ENCODE measurements at regions of chr12 and their contacts with region 1.

Region 1: DNA sequence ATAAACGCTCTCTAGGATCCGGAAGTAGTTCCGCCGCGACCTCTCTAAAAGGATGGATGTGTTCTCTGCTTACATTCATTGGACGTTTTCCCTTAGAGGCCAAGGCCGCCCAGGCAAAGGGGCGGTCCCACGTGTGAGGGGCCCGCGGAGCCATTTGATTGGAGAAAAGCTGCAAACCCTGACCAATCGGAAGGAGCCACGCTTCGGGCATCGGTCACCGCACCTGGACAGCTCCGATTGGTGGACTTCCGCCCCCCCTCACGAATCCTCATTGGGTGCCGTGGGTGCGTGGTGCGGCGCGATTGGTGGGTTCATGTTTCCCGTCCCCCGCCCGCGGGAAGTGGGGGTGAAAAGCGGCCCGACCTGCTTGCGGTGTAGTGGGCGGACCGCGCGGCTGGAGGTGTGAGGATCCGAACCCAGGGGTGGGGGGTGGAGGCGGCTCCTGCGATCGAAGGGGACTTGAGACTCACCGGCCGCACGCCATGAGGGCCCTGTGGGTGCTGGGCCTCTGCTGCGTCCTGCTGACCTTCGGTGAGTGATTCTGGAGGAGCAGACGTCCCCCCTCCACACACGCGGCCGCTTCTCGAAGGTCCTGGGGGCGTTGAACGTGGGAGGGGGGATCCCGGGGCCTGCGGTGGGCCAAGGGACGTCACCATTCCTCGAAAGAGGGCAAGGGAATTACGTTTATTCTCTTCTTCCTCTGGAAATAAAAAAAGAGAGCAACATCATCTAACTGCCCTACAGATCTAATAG is at the start of gene HSP90B1:
- DNase-seq: peak; percentile 100
- H3K4me3 Mint-ChIP-seq: peak within 1 kb of the TSS; percentile 91
- H3K27ac Mint-ChIP-seq: peak within 1 kb of the TSS; percentile 99
- H3K4me1 Mint-ChIP-seq: peaks cover 73% of the 10 kb centered on the region
- H3K27me3 Mint-ChIP-seq: peaks cover 6% of the 10 kb centered on the region
- total RNA-seq, gene HSP90B1: 427 and 446 TPM in 2 replicates

Region 2: GRCh38 chr12:103877934-103878510 is 52.2 kb before region 1 on chr12:
- intact Hi-C with region 1: loop called (anchors 1 kb)
- DNase-seq: peak; percentile 53
- H3K4me3 Mint-ChIP-seq: no peak overlapping the region
- H3K27ac Mint-ChIP-seq: no peak overlapping the region
- H3K4me1 Mint-ChIP-seq: peaks cover 36% of the 10 kb centered on the region
- H3K27me3 Mint-ChIP-seq: peaks cover 10% of the 10 kb centered on the region

Region 3: DNA sequence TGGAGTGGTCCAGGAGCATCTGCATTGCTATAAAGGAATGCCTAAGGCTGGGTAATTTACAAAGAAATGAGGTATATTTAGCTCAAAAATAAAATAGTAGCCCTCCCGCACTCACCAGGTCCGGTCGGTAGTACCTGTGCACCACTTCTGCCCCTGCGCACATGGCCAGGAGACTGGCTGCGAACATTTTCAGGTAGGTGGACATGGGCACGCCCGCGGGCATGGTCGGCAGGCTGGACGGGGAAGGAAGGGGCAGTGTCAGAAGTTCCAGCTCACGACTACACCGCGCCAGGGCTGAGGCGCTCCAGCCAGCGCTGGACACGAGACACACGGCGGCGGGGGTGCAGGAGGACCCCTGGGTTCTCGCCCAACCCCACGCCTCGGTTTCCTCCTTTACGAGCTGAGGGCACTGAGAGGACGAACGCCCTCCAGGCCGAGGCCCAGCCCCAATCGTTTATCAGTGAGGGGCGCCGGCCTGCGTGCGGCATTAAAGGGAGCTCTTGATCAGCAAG is 26.4 kb after region 1 on chr12:
- intact Hi-C with region 1: loop called (anchors 1 kb)
- DNase-seq: peak; percentile 3
- H3K4me3 Mint-ChIP-seq: peak overlapping the region; percentile 100
- H3K27ac Mint-ChIP-seq: peak overlapping the region; percentile 100
- H3K4me1 Mint-ChIP-seq: peaks cover 61% of the 10 kb centered on the region
- H3K27me3 Mint-ChIP-seq: no peaks in the 10 kb centered on the region

Region 4: GRCh38 chr12:104064031-104064822 is 134.0 kb after region 1 on chr12 and contains the start of gene HCFC2:
- intact Hi-C with region 1: loop called (anchors 1 kb)
- DNase-seq: peak; percentile 88
- H3K4me3 Mint-ChIP-seq: peak within 1 kb of the TSS; percentile 95
- H3K27ac Mint-ChIP-seq: peak within 1 kb of the TSS; percentile 86
- H3K4me1 Mint-ChIP-seq: peaks cover 36% of the 10 kb centered on the region
- H3K27me3 Mint-ChIP-seq: peaks cover 24% of the 10 kb centered on the region
- total RNA-seq, gene HCFC2: 8.5 and 8.9 TPM in 2 replicates

Region 5: GRCh38 chr12:104108755-104109445 is 178.7 kb after region 1 on chr12:
- intact Hi-C with region 1: loop called (anchors 5 kb)
- DNase-seq: peak; percentile 70
- H3K4me3 Mint-ChIP-seq: no peak overlapping the region
- H3K27ac Mint-ChIP-seq: no peak overlapping the region
- H3K4me1 Mint-ChIP-seq: peaks cover 11% of the 10 kb centered on the region
- H3K27me3 Mint-ChIP-seq: no peaks in the 10 kb centered on the region

Region 6: GRCh38 chr12:104303538-104304151 is 373.4 kb after region 1 on chr12 and contains the start of gene EID3:
- intact Hi-C with region 1: loop called (anchors 5 kb)
- DNase-seq: peak; percentile 92
- H3K4me3 Mint-ChIP-seq: peak within 1 kb of the TSS; percentile 93
- H3K27ac Mint-ChIP-seq: peak within 1 kb of the TSS; percentile 99
- H3K4me1 Mint-ChIP-seq: peaks cover 66% of the 10 kb centered on the region
- H3K27me3 Mint-ChIP-seq: no peaks in the 10 kb centered on the region
- total RNA-seq, gene EID3: 10.5 and 10.6 TPM in 2 replicates

Region 7: GRCh38 chr12:105330283-105330930 is 1400.2 kb after region 1 on chr12 and contains the start of gene C12orf75:
- intact Hi-C with region 1: loop called (anchors 5 kb)
- DNase-seq: peak; percentile 93
- H3K4me3 Mint-ChIP-seq: peak within 1 kb of the TSS; percentile 87
- H3K27ac Mint-ChIP-seq: peak within 1 kb of the TSS; percentile 91
- H3K4me1 Mint-ChIP-seq: peaks cover 83% of the 10 kb centered on the region
- H3K27me3 Mint-ChIP-seq: no peaks in the 10 kb centered on the region
- total RNA-seq, gene C12orf75: 87.8 and 93.4 TPM in 2 replicates

Measured in activated T-helper 1 cell treated with anti-CD3 and anti-CD28 coated beads, Interleukin-12 subunit alpha, Interleukin-12 subunit beta, Interleukin-2, Interleukin-4 antibody, amounts not matched to agents 30 ng/mL and 10 ng/mL and 1 ng/mL, durations not matched to agents 14 hours and 24 hours and 36 hours (primary cell).